Heart right ventricle (tissue), 16 donors: ENCODE measurements at regions of chr5 and their contacts with region 1.

Region 1: GRCh38 chr5:95846554-95847260 is 24.2 kb upstream of the GLRX start:
- DNase-seq: peak in 1 of 2 donors; percentile 71
- ATAC-seq: peak; percentile 56 to 84 (median 72)
- H3K4me3 ChIP-seq: no peak overlapping the region
- H3K27ac ChIP-seq: no peak overlapping the region
- H3K4me1 ChIP-seq: peaks cover 0 to 41% (median 12%) of the 10 kb centered on the region in 9 donors
- H3K27me3 ChIP-seq: no peaks in the 10 kb centered on the region
- CTCF ChIP-seq: peak; percentile 92 to 98 (median 96)

Region 2: DNA sequence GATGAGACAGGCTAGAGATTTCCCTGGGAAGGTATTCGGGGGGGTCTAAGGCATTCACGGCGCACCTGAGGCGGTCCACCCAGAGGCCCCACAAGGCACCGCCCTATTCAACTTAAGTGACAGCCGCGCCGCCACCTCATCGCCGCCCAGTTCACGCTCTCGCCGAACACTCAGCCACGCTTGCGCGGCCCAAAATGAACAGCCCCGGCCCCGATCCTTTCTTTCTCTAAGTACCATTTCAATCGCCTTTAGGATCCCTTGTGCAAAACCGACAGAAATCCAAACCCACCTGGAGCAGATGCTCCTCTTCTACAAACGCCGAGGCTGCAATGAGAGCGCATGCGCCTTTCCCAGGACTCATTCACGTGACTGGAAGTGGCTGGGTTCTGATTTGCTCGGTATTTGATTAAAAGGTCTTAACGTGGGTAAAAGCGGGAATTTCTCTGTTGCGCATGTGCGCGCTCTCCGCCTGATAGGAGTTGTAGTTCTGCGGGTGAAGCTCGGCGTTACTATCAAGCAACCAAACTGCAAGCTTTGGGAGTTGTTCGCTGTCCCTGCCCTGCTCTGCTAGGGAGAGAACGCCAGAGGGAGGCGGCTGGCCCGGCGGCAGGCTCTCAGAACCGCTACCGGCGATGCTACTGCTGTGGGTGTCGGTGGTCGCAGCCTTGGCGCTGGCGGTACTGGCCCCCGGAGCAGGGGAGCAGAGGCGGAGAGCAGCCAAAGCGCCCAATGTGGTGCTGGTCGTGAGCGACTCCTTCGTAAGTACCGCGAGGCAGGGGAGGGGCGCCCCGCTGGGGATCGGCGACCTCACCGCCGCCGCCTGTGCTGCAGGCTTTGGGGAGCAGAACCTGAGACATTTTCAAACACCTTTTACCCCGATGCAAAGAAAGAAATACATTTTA is 291.8 kb before region 1 on chr5 and contains the starts of genes ARSK and SKIC3:
- intact Hi-C with region 1: loop called in 2 of 10 experiments (anchors 10 kb)
- DNase-seq: peak; percentile 91 to 96
- ATAC-seq: peak; percentile 97 to 99 (median 98)
- H3K4me3 ChIP-seq: peak within 1 kb of the TSS; percentile 58 to 96 (median 74)
- H3K27ac ChIP-seq: peak within 1 kb of the TSS; percentile 43 to 91 (median 84)
- H3K4me1 ChIP-seq: peaks cover 0 to 45% (median 31%) of the 10 kb centered on the region in 9 donors
- H3K27me3 ChIP-seq: no peaks in the 10 kb centered on the region
- CTCF ChIP-seq: peak in 7 of 9 donors; percentile 16 to 61 (median 47)
- total RNA-seq, gene ARSK: 2.6 to 6.3 (median 3.8) TPM
- total RNA-seq, gene SKIC3: 53.5 to 74.9 (median 68.6) TPM

Region 3: DNA sequence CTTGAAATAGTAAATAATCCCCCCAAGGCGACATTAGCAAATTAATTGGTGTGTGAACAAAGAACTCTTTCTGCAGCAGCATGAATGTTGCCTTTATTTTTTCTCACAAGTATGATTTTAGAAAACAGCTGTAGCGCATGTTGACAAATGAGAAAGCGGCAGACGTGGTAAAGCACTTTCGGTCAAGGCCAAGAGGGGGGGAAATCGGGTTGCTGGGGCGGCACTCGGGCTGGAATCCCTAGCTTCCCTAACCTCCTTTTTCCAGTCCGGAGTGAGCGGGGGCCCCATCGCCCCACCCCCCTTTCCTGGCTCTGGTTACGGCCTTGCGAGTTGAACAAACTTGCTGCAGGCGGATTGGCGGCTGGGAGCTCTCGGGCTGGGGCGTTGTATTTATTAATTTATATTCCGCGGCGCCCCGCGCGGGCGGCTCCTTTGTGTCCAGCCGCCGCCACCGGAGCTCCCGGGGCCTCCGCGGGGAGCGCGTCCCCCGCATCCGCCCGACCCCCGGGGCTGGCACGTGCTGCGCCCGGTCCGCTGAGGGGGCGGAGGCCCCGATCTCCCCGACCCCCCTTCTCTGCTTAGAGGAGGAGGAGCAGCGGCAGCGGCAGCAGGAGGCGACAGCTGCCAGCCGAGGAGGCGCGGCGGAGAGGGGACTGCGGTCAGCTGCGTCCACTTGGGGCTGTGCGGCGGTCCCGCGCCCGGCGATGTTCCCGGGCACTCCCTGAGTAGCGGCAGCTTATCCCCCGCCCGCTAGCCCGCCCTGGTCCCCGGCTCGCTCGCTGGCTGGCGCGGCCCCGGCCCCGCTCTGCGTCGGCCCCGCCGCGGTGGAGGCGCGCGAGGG is 115.8 kb before region 1 on chr5 and contains the start of gene RHOBTB3:
- intact Hi-C with region 1: loop called in 1 of 10 experiments (anchors 5 kb)
- DNase-seq: peak; percentile 90 to 91
- ATAC-seq: peak; percentile 74 to 88 (median 78)
- H3K4me3 ChIP-seq: peak within 1 kb of the TSS; percentile 56 to 84 (median 78)
- H3K27ac ChIP-seq: peak within 1 kb of the TSS; percentile 79 to 98 (median 93)
- H3K4me1 ChIP-seq: peaks cover 0 to 75% (median 48%) of the 10 kb centered on the region in 9 donors
- H3K27me3 ChIP-seq: peaks cover 0 to 9% (median 0%) of the 10 kb centered on the region in 7 donors
- CTCF ChIP-seq: peak in 1 of 9 donors; percentile 25
- total RNA-seq, gene RHOBTB3: 73.1 to 124 (median 94.4) TPM

Region 4: DNA sequence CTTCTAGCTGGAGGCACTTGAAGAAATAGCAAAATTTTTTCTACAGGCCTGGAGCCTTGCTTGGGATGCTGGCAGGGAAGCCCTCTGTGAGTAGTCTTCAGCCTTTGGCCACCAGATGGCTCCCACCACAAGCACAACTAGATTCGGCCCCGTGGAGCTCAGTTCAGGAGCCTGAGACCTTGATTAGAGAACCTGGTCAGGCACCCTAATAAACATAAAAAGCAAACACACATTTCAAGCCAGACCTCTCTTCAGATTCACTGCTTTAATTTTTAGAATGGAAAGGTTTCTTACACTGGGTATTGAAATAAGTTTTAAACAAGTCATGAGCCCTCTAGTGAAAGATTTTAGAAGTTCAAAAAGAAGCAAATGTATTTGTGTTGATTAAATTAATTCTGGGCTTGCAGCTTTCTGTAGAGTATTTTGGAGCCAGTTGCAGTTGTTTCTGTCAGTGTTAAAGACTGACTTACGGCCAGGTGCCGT is 65.6 kb before region 1 on chr5:
- intact Hi-C with region 1: loop called (anchors 1 to 2 kb)
- DNase-seq: peak; percentile 68 to 84
- ATAC-seq: peak; percentile 88 to 95 (median 92)
- H3K4me3 ChIP-seq: no peak overlapping the region
- H3K27ac ChIP-seq: peak overlapping the region in 8 of 10 donors; percentile 5 to 77 (median 46)
- H3K4me1 ChIP-seq: peaks cover 0 to 52% (median 30%) of the 10 kb centered on the region in 9 donors
- H3K27me3 ChIP-seq: no peaks in the 10 kb centered on the region
- CTCF ChIP-seq: peak in 8 of 9 donors; percentile 70 to 96 (median 91)

Region 5: GRCh38 chr5:96037128-96037527 is 190.4 kb after region 1 on chr5:
- intact Hi-C with region 1: no loop called
- DNase-seq: no peak
- ATAC-seq: no peak
- H3K4me3 ChIP-seq: no peak overlapping the region
- H3K27ac ChIP-seq: no peak overlapping the region
- H3K4me1 ChIP-seq: no peaks in the 10 kb centered on the region
- H3K27me3 ChIP-seq: no peaks in the 10 kb centered on the region
- CTCF ChIP-seq: no peak